Mammary epithelial cell (primary cell): ENCODE measurements at regions of chr5 and their contacts with region 1.

Region 1: GRCh38 chr5:107253246-107253645 is 417.5 kb downstream of the EFNA5 start:
- DNase-seq: no peak
- H3K4me3 ChIP-seq: no peak overlapping the region
- H3K27ac ChIP-seq: no peak overlapping the region
- H3K4me1 ChIP-seq: no peaks in the 10 kb centered on the region
- H3K27me3 ChIP-seq: no peaks in the 10 kb centered on the region
- CTCF ChIP-seq: no peak

Region 2: DNA sequence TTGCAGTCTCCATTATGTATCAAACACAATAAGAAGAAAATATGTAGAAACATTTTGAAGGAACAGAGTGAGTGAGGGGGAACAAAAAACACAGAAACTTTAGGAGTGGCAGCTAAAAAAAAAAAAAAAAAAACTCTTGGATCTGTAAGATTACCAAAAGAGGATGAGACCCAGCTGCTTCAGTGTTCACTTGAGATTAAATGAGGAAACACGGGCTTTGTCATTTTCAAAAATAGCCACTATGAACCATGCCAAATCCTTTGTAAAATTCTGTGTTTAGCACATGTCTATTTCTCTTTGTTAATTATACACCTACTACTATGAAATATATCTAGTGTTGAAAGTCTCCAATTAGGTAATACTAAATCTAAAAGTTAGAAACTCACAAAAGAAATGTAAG is 68.4 kb before region 1 on chr5:
- CTCF ChIA-PET with region 1: no interaction called
- dilution Hi-C with region 1: loop called (anchors 5 kb)
- in situ Hi-C with region 1: no loop called
- intact Hi-C with region 1: no loop called
- DNase-seq: no peak
- H3K4me3 ChIP-seq: no peak overlapping the region
- H3K27ac ChIP-seq: no peak overlapping the region
- H3K4me1 ChIP-seq: no peaks in the 10 kb centered on the region
- H3K27me3 ChIP-seq: peaks cover 3% of the 10 kb centered on the region
- CTCF ChIP-seq: no peak

Region 3: GRCh38 chr5:107373549-107374263 is 120.5 kb after region 1 on chr5:
- CTCF ChIA-PET with region 1: no interaction called
- dilution Hi-C with region 1: no loop called
- in situ Hi-C with region 1: no loop called
- intact Hi-C with region 1: no loop called
- DNase-seq: no peak
- H3K4me3 ChIP-seq: no peak overlapping the region
- H3K27ac ChIP-seq: no peak overlapping the region
- H3K4me1 ChIP-seq: peaks cover 24% of the 10 kb centered on the region
- H3K27me3 ChIP-seq: no peaks in the 10 kb centered on the region
- CTCF ChIP-seq: no peak